ENCODE measurements at regions of chr5 and their contacts with region 1.

Region 1: DNA sequence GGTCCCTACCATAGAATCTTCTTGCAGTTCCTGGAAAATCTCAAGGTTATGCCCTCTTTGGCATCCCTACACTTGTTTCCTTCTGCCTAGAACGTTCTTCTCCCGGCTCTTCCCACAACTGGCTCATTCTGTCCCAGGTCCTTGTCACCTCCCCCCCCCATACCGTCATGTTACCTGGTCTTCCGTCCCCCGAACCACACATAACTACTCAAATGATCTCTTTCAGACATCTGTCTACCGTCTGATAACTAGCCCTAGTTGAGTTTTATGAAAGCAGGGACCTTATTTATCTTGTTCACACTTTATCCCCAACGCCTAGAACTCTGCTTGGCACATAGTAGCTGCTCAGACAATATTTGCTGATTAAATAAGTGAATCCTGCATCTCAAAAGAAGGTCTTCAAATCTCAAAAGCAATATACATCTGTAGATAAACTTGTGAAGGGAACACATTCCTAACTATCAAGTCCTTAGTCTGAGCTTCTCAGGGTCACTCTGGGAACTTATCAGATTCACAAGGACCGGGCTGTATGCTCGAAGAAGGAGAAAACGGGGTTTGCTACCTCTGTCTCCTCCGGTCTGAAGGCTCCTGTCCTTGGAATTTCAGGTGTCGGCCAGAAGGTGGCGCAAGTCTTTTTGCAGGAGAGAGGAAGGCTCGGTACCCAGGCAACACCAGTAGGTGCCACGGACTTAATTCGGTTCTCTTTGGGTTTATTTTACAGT is 30.0 kb downstream of the LCP2 start:
- DNase-seq: peak; percentile 68 to 81
- ATAC-seq: peak in 3 of 4 donors; percentile 44 to 78 (median 48)
- H3K4me3 ChIP-seq: no peak overlapping the region
- H3K27ac ChIP-seq: no peak overlapping the region
- H3K4me1 ChIP-seq: no peaks in the 10 kb centered on the region
- H3K27me3 ChIP-seq: peaks cover 0 to 4% (median 0%) of the 10 kb centered on the region in 3 donors
- CTCF ChIP-seq: peak; percentile 67

Region 2: GRCh38 chr5:170312666-170313065 is 45.1 kb after region 1 on chr5:
- intact Hi-C with region 1: no loop called
- DNase-seq: no peak
- ATAC-seq: peak in 1 of 4 donors; percentile 38
- H3K4me3 ChIP-seq: no peak overlapping the region
- H3K27ac ChIP-seq: no peak overlapping the region
- H3K4me1 ChIP-seq: no peaks in the 10 kb centered on the region
- H3K27me3 ChIP-seq: peaks cover 0 to 2% (median 0%) of the 10 kb centered on the region in 3 donors
- CTCF ChIP-seq: no peak

Region 3: GRCh38 chr5:170338933-170339779 is 71.6 kb after region 1 on chr5:
- intact Hi-C with region 1: loop called in 1 of 2 experiments (anchors 5 kb)
- DNase-seq: no peak
- ATAC-seq: no peak
- H3K4me3 ChIP-seq: no peak overlapping the region
- H3K27ac ChIP-seq: no peak overlapping the region
- H3K4me1 ChIP-seq: no peaks in the 10 kb centered on the region
- H3K27me3 ChIP-seq: no peaks in the 10 kb centered on the region
- CTCF ChIP-seq: peak; percentile 24

Region 4: GRCh38 chr5:170633235-170634081 is 365.9 kb after region 1 on chr5:
- intact Hi-C with region 1: loop called in 1 of 2 experiments (anchors 5 kb)
- DNase-seq: peak; percentile 52 to 66
- ATAC-seq: peak; percentile 23 to 68 (median 58)
- H3K4me3 ChIP-seq: peak overlapping the region; percentile 36
- H3K27ac ChIP-seq: peak overlapping the region; percentile 58
- H3K4me1 ChIP-seq: no peaks in the 10 kb centered on the region
- H3K27me3 ChIP-seq: peaks cover 0 to 4% (median 0%) of the 10 kb centered on the region in 3 donors
- CTCF ChIP-seq: no peak

Measured in psoas muscle (tissue), 8 donors.